Heart right ventricle (tissue), 16 donors: ENCODE measurements at regions of chr12 and their contacts with region 1.

Region 1: GRCh38 chr12:68686595-68687521 is at the start of gene NUP107:
- DNase-seq: peak; percentile 98 to 99
- ATAC-seq: peak; percentile 98 to 100 (median 99)
- H3K4me3 ChIP-seq: peak within 1 kb of the TSS; percentile 63 to 96 (median 83)
- H3K27ac ChIP-seq: peak within 1 kb of the TSS; percentile 10 to 86 (median 78)
- H3K4me1 ChIP-seq: peaks cover 0 to 28% (median 13%) of the 10 kb centered on the region in 9 donors
- H3K27me3 ChIP-seq: no peaks in the 10 kb centered on the region
- CTCF ChIP-seq: peak in 6 of 9 donors; percentile 8 to 30 (median 19)
- total RNA-seq, gene NUP107: 21.0 to 25.7 (median 22.2) TPM

Region 2: GRCh38 chr12:68331869-68332727 is 354.8 kb before region 1 on chr12 and contains the start of gene MDM1:
- intact Hi-C with region 1: loop called in 2 of 10 experiments (anchors 5 to 10 kb)
- DNase-seq: peak; percentile 96 to 99
- ATAC-seq: peak; percentile 99 to 100 (median 100)
- H3K4me3 ChIP-seq: peak within 1 kb of the TSS; percentile 69 to 88 (median 76)
- H3K27ac ChIP-seq: peak within 1 kb of the TSS in 9 of 10 donors; percentile 57 to 82 (median 69)
- H3K4me1 ChIP-seq: peaks cover 0 to 22% (median 14%) of the 10 kb centered on the region in 9 donors
- H3K27me3 ChIP-seq: no peaks in the 10 kb centered on the region
- CTCF ChIP-seq: no peak
- total RNA-seq, gene MDM1: 3.3 to 8.5 (median 6.2) TPM

Region 3: DNA sequence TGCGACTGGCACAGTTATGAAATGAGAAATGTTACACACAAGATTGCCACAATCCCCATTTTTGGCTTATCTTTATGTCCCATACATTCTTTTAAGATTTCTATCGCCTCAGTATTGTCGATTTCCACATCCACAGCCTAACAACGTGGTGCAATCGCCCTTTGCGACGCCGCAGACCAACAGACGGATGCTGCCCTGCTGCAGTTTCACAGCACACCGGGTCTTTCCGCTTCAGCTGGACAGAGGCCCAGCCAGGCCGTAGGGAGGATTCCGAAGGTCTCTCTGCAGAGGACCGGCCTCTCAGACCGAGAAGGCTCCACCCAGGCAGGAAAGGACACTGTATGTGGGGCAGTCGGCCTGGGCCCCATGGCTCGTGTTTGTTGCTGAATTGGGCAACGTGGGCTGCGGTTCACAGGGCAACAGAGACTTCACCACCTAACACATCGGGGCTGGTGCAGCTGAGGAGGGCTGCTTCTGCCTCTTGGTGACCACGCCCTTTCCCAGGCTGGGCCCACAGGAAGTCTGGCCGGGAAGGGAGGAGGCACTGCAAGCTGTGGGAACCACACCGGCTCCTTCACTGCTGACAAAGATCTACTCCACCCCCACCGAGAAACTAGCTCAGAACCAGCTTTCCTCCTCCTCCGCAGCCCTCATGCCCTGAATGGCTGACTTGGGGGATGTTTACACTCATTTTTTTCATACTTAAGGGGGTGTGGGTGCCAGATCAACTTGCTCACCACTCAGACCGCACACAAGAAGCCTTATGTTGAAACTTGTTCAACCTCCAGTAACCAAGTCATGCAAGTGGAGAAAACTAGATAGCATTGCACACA is 321.7 kb before region 1 on chr12:
- intact Hi-C with region 1: loop called in 2 of 10 experiments (anchors 5 to 10 kb)
- DNase-seq: peak; percentile 89 to 92
- ATAC-seq: peak; percentile 97 to 99 (median 98)
- H3K4me3 ChIP-seq: peak overlapping the region; percentile 4 to 56 (median 40)
- H3K27ac ChIP-seq: peak overlapping the region; percentile 65 to 93 (median 82)
- H3K4me1 ChIP-seq: peaks cover 0 to 69% (median 37%) of the 10 kb centered on the region in 9 donors
- H3K27me3 ChIP-seq: no peaks in the 10 kb centered on the region
- CTCF ChIP-seq: peak in 3 of 9 donors; percentile 23 to 37 (median 28)

Region 4: DNA sequence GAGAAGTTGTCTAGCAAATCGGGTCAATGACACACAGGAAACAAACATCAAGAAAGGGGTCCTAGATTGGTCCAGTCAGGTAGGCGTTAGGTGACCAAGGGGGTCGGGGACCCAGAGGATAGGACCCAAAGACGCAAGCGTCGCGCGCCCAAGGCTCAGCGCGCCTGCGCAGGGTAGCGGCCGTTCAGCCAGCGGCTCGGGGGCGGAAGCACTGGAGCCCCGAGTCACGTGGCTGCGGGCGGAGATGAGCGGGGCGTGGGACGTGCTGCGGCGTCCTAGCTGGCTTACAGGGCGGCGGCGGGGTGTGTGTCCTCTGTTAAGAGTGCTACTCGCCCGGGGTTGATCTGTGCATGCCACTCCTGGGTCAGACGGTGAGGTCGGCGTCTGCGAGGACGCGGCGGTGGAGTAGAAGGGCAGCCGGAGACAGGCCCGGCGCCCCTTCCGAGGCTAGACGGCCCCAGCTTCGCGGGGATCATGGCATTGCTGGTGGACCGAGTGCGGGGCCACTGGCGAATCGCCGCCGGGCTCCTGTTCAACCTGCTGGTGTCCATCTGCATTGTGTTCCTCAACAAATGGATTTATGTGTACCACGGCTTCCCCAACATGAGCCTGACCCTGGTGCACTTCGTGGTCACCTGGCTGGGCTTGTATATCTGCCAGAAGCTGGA is 59.2 kb after region 1 on chr12 and contains the start of gene SLC35E3:
- intact Hi-C with region 1: loop called in 1 of 10 experiments (anchors 5 kb)
- DNase-seq: peak; percentile 91 to 94
- ATAC-seq: peak; percentile 100
- H3K4me3 ChIP-seq: peak within 1 kb of the TSS; percentile 62 to 88 (median 72)
- H3K27ac ChIP-seq: peak within 1 kb of the TSS; percentile 41 to 89 (median 79)
- H3K4me1 ChIP-seq: peaks cover 0 to 29% (median 17%) of the 10 kb centered on the region in 9 donors
- H3K27me3 ChIP-seq: no peaks in the 10 kb centered on the region
- CTCF ChIP-seq: no peak
- total RNA-seq, gene SLC35E3: 4.3 to 8.9 (median 6.6) TPM